ENCODE measurements at regions of chr11 and their contacts with region 1.

Region 1: GRCh38 chr11:110376711-110377324 is 52.9 kb upstream of the FDX1 start:
- DNase-seq: no peak

Region 2: GRCh38 chr11:109946322-109946846 is 430.4 kb before region 1 on chr11:
- intact Hi-C with region 1: loop called (anchors 10 kb)
- DNase-seq: peak; percentile 94

Region 3: GRCh38 chr11:110200241-110200640 is 176.6 kb before region 1 on chr11:
- intact Hi-C with region 1: loop called in 1 of 2 experiments (anchors 5 kb)
- DNase-seq: no peak